ENCODE measurements at regions of chr12 and their contacts with region 1.

Region 1: DNA sequence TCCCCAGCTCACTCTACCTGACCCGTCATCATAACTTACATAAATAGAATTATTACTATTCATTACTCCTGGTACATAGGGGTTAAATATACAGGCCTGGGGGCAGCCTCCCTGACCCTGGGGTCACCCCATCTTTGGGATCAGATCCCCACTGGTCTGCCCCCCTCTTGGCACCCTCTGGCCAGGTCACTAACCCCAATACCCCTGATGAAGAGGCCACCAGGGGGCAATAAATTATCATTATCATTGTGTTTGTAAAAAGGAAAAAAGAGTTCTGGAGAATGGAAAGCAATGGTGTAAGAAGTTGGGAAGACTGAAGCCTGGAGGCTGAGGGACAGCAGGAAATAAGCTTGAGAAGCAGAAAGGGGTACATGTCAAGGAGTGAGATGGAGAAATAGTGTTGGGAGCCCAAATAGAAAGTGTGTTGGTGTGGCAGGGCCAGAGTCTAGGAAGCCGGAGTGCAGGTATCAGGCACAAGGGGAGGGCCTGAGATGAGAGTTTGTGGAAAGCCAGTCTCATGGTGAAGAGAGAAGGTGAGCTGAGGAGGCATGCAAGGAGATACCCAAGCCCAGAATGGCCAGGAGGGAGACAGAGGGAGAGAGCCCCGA is 6.1 kb upstream of the AAAS start:
- DNase-seq: peak; percentile 38
- H3K4me3 ChIP-seq: no peak overlapping the region
- H3K27ac ChIP-seq: no peak overlapping the region
- H3K4me1 ChIP-seq: peaks cover 27% of the 10 kb centered on the region
- CTCF ChIP-seq: peak; percentile 80

Region 2: DNA sequence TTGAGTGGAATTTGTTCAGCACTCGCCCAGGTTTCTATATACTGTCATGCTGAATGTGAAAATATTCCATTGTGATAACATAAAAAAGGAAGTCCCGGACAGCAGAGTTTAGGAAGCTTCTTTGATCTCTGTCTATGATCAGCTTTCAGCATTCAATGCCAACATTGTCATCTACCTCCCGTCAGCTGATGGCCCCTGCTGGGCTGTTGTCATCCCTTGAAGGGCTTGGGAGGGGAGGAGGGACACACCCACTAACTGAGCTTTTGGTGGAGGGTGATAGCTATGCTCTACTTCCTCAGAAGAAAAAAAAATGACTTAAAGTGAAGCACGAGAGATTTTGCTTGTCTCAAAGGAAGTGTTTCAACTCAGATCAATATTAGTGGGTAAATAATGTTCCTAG is 619.5 kb before region 1 on chr12:
- CTCF ChIA-PET with region 1: no interaction called
- POLR2A ChIA-PET with region 1: no interaction called
- intact Hi-C with region 1: no loop called
- DNase-seq: no peak
- H3K4me3 ChIP-seq: no peak overlapping the region
- H3K27ac ChIP-seq: no peak overlapping the region
- H3K4me1 ChIP-seq: no peaks in the 10 kb centered on the region
- CTCF ChIP-seq: no peak

Region 3: GRCh38 chr12:53220801-53221202 is 106.7 kb before region 1 on chr12:
- CTCF ChIA-PET with region 1: interaction called, 10 read pairs
- POLR2A ChIA-PET with region 1: no interaction called
- intact Hi-C with region 1: no loop called
- DNase-seq: peak; percentile 90
- H3K4me3 ChIP-seq: peak overlapping the region; percentile 74
- H3K27ac ChIP-seq: peak overlapping the region; percentile 90
- H3K4me1 ChIP-seq: peaks cover 72% of the 10 kb centered on the region
- CTCF ChIP-seq: no peak

Region 4: DNA sequence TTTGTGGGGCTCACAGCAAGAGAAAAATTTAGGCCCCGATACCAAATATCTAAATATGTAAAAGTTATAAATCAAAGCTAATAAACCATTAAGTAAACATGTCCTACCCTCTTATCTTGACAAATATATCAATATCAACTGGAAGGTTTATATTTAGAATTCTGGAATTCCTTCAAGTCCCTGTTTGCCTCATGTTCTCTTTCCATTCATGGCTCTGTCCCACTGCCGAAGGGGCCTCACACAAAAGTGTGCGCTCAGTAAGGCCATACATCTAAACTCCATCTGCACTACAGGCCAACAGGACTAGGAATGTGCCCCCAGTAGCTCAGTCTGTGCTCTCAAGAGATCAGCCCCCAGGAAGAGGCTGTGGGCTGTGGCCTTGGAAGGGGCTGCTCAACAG is 358.9 kb after region 1 on chr12:
- CTCF ChIA-PET with region 1: no interaction called
- POLR2A ChIA-PET with region 1: no interaction called
- intact Hi-C with region 1: no loop called
- DNase-seq: no peak
- H3K4me3 ChIP-seq: no peak overlapping the region
- H3K27ac ChIP-seq: no peak overlapping the region
- H3K4me1 ChIP-seq: no peaks in the 10 kb centered on the region
- CTCF ChIP-seq: no peak

Measured in OCI-LY7 (cell line).